Common myeloid progenitor, CD34-positive (primary cell): ENCODE measurements at regions of chr3 and their contacts with region 1.

Region 1: DNA sequence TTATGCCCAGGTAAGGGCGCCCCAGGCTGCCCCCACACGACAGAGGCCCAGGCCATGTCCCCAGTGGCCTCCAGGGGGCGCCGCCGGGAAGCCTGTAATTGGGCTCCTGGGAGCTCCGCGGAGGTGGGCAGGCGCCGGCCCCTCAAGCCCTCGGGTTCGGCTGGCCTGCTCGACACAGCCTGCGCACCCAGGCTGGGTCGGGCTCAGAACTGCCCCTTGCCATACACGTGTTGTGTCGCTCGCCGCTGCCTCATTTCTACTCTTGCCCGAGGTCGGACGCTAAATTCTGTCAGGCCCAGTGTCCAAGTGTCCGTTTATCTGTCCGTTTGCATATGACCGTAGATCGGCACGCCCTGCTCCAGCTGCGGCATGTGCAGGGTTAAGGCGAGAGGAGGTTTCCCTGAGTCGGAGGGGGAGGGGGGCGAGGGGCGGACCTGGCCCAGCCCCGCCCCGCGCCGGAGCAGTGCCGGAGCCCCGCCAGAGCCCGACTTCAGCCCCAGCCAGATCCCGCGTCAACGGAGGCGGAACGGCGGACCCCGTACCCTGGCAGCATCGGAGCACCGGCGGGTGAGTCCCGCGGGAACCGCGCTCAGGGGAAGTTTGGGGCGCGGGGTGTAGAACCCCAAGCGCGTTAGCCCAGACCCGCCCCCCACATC is at the start of gene KLHDC8B:
- DNase-seq: peak; percentile 78 to 86 (median 83)
- H3K4me3 ChIP-seq: peak within 1 kb of the TSS; percentile 59 to 89 (median 79)
- H3K27ac ChIP-seq: peak within 1 kb of the TSS in 1 of 2 experiments; percentile 72
- H3K4me1 ChIP-seq: peaks cover 0 to 51% (median 37%) of the 10 kb centered on the region in 4 experiments
- H3K27me3 ChIP-seq: no peaks in the 10 kb centered on the region

Region 2: DNA sequence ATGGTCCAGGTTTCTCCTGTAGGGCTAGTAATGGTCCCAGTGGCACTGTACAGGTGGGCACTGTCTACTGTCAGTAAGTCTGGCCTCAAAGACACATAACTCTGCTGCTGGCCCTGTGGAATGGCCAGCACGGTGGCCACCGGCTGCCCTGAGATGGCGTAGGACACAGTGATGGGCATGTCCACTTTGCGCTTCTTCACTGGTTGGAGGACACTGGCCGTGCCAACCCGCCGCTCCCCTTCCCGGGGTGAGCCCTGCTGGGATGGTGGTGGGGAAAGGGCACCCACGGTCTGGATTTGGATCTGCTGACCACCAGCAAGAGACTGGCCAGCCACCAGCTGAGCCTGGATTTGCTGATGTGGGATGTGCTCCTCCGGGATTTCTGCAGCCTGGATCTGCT is 114.0 kb before region 1 on chr3:
- CTCF ChIA-PET with region 1: no interaction called
- POLR2A ChIA-PET with region 1: no interaction called
- DNase-seq: no peak
- H3K4me3 ChIP-seq: no peak overlapping the region
- H3K27ac ChIP-seq: no peak overlapping the region
- H3K4me1 ChIP-seq: no peaks in the 10 kb centered on the region
- H3K27me3 ChIP-seq: no peaks in the 10 kb centered on the region

Region 3: DNA sequence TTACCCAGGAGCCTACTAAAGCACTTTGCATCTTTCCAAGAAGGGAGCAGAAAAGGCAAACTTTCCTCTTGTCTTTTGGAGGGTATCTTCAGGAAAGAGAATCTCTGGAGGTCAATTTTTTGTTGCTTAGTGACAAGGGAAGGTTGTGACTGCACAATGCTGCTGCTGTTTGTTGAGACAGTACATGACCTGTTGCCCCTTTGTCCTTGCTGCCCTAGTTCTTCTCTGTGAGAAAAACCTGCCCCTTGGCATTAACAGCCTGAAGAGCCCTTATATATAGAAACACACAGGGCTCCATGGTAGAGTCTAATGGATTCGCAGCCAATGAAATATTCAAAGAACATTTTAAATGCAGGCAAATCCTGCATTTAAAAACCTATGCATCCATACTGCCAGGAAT is 20.5 kb after region 1 on chr3:
- CTCF ChIA-PET with region 1: interaction called, 12 read pairs
- POLR2A ChIA-PET with region 1: interaction called, 3 read pairs
- DNase-seq: no peak
- H3K4me3 ChIP-seq: no peak overlapping the region
- H3K27ac ChIP-seq: no peak overlapping the region
- H3K4me1 ChIP-seq: peaks cover 3 to 17% (median 11%) of the 10 kb centered on the region in 4 experiments
- H3K27me3 ChIP-seq: peaks cover 0 to 2% (median 0%) of the 10 kb centered on the region in 5 experiments

Region 4: GRCh38 chr3:49276475-49277382 is 105.5 kb after region 1 on chr3 and contains the start of gene C3orf62:
- CTCF ChIA-PET with region 1: interaction called, 21 read pairs
- POLR2A ChIA-PET with region 1: no interaction called
- DNase-seq: peak; percentile 60 to 78 (median 74)
- H3K4me3 ChIP-seq: peak within 1 kb of the TSS; percentile 3 to 78 (median 60)
- H3K27ac ChIP-seq: peak within 1 kb of the TSS; percentile 64 to 81
- H3K4me1 ChIP-seq: peaks cover 8 to 24% (median 17%) of the 10 kb centered on the region in 4 experiments
- H3K27me3 ChIP-seq: no peaks in the 10 kb centered on the region